ENCODE measurements at regions of chr10 and their contacts with region 1.

Region 1: DNA sequence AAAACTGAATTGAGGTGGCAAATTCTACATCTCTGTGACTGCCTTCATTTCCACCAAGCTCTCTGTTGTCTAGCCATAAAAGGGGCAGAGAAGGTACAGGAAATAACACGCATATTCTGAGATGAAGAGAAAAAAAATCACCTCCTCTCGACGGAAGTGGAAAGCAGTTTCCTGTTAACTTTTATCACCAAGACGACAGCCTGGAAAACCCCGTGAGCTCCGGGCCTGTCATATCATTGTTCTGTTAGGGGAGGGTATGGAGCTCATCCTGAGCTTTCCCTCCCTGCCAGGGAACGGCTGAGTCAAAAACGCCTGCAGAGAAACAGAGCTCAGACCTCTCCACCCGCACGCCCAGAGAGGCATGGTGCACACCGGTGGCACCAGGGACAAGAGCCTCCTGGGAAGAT is 200.3 kb downstream of the PRPF18 start:
- DNase-seq: peak; percentile 50
- ATAC-seq: peak; percentile 80
- H3K4me3 Mint-ChIP-seq: peak overlapping the region; percentile 80
- H3K27ac Mint-ChIP-seq: peak overlapping the region; percentile 97
- H3K4me1 Mint-ChIP-seq: peaks cover 57% of the 10 kb centered on the region
- H3K27me3 Mint-ChIP-seq: no peaks in the 10 kb centered on the region
- CTCF ChIP-seq: no peak

Region 2: GRCh38 chr10:13079776-13080050 is 707.3 kb before region 1 on chr10:
- CTCF ChIA-PET with region 1: no interaction called
- POLR2A ChIA-PET with region 1: no interaction called
- intact Hi-C with region 1: no loop called
- DNase-seq: no peak
- ATAC-seq: no peak
- H3K4me3 Mint-ChIP-seq: no peak overlapping the region
- H3K27ac Mint-ChIP-seq: no peak overlapping the region
- H3K4me1 Mint-ChIP-seq: peaks cover 3% of the 10 kb centered on the region
- H3K27me3 Mint-ChIP-seq: peaks cover 18% of the 10 kb centered on the region
- CTCF ChIP-seq: no peak

Region 3: DNA sequence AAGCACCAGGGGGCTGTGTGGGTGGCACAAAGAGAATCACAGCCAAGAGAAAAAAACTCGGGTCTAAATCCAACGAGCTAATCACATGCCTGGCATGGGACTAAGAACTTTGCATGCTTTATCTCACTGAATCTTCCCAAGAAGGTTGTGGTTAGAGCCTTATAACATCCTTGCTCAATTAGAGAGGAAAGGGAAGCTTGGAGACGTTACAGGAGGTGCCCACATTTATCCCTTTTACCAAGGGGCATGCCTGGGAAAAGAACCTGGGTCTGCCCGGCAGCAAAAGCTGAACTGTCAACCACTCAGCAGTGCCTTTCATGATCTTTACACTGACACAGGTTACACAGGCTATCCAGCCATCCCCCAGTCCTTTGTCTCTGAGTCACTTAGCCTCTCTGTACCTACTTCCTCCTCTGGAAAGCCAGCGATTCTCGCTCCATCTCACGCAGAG is 10.1 kb before region 1 on chr10:
- CTCF ChIA-PET with region 1: interaction called, 5 read pairs
- POLR2A ChIA-PET with region 1: no interaction called
- intact Hi-C with region 1: loop called (anchors 1 kb)
- DNase-seq: no peak
- ATAC-seq: peak; percentile 74
- H3K4me3 Mint-ChIP-seq: no peak overlapping the region
- H3K27ac Mint-ChIP-seq: no peak overlapping the region
- H3K4me1 Mint-ChIP-seq: peaks cover 41% of the 10 kb centered on the region
- H3K27me3 Mint-ChIP-seq: peaks cover 25% of the 10 kb centered on the region
- CTCF ChIP-seq: no peak

Region 4: GRCh38 chr10:13924040-13924725 is 137.2 kb after region 1 on chr10:
- CTCF ChIA-PET with region 1: no interaction called
- POLR2A ChIA-PET with region 1: no interaction called
- intact Hi-C with region 1: loop called (anchors 2 kb)
- DNase-seq: no peak
- ATAC-seq: no peak
- H3K4me3 Mint-ChIP-seq: no peak overlapping the region
- H3K27ac Mint-ChIP-seq: no peak overlapping the region
- H3K4me1 Mint-ChIP-seq: peaks cover 25% of the 10 kb centered on the region
- H3K27me3 Mint-ChIP-seq: peaks cover 6% of the 10 kb centered on the region
- CTCF ChIP-seq: no peak

Region 5: DNA sequence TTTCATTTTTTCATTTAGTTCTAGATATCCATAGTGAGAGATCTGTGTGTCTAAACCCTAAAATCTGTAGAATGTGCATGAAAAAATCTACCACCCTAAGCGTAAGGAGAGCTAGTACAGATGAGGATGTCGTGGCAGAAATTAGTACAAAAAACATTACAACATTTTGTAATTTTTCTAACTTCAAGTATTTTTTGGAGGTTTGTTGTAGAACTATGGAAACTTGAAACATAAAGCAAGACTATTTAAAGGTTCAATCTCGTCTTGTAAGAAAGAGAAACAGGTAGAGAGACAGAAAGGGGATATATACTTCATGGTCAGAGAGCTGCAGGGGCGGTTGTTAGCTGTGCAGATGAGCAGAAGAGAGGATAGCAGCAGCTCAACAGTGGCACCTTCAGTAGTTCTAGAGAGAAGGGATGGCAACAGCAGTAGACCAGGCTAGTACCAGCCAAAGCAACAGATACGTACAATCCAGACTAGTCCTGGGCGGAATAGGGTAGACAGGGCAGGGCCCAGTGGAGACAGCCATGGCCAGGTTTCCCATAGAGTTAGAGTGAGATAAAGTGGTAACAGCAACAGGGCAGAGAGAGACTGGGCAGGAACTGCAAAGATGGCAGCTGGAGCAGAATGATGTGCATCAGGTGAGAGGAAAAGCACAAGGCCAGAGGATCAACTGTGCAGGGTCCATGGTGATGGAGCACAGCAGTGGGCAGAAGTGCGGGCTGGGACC is 398.5 kb after region 1 on chr10:
- CTCF ChIA-PET with region 1: interaction called, 7 read pairs
- POLR2A ChIA-PET with region 1: interaction called, 14 read pairs
- intact Hi-C with region 1: loop called (anchors 1 kb)
- DNase-seq: peak; percentile 23
- ATAC-seq: peak; percentile 86
- H3K4me3 Mint-ChIP-seq: peak overlapping the region; percentile 64
- H3K27ac Mint-ChIP-seq: peak overlapping the region; percentile 88
- H3K4me1 Mint-ChIP-seq: peaks cover 37% of the 10 kb centered on the region
- H3K27me3 Mint-ChIP-seq: peaks cover 15% of the 10 kb centered on the region
- CTCF ChIP-seq: no peak

Region 6: DNA sequence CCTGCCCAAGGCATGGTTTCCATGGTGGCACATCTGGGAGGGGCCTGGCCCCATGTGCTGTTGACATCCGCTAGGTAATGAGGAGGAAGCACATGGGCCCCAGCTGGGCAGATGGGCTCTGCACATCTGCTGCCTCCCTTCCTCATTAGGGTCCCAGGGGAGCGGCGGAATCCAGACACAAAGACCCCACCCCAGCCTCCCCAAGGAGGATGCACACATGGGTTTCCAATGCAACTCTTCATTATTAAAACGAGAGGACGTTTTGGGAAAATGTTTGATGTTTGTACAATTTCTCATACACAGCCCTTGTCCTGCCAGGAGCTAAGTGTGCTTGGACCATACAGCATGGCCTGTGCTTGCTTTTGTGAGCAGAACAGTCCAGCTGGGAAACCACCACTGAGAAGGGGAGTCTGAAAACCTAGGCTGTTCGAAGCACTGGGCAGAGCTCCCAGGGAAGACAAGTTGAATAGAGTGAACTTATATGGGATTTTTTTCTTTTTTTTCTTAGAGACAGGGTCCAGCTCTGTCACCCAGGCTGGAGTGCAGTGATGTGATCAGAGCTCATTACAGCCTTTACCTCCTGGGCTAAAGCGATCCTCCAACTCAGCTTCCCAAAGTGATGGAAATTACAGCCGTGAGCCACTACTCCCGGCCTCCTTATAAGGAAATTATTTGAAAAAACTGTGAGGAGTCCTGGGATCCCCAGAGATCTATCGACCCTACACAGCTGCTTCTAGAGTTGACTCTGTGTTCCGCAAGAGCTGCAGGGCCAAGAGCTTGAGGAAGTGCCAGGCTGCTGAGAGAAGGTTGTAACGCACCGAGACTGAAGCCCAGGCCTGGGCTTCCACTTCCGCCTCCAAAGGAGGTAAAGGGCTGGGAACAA is 964.2 kb after region 1 on chr10:
- CTCF ChIA-PET with region 1: no interaction called
- POLR2A ChIA-PET with region 1: no interaction called
- intact Hi-C with region 1: loop called (anchors 5 kb)
- DNase-seq: peak; percentile 60
- ATAC-seq: peak; percentile 78
- H3K4me3 Mint-ChIP-seq: peak overlapping the region; percentile 70
- H3K27ac Mint-ChIP-seq: peak overlapping the region; percentile 97
- H3K4me1 Mint-ChIP-seq: peaks cover 71% of the 10 kb centered on the region
- H3K27me3 Mint-ChIP-seq: no peaks in the 10 kb centered on the region
- CTCF ChIP-seq: no peak